ENCODE measurements at regions of chr7 and their contacts with region 1.

Region 1: GRCh38 chr7:76223286-76223972 is 21.7 kb downstream of the SRRM3 start:
- DNase-seq: no peak
- H3K4me3 Mint-ChIP-seq: no peak overlapping the region
- H3K27ac Mint-ChIP-seq: no peak overlapping the region
- H3K4me1 Mint-ChIP-seq: no peaks in the 10 kb centered on the region
- H3K27me3 Mint-ChIP-seq: peaks cover 22% of the 10 kb centered on the region
- CTCF ChIP-seq: no peak

Region 2: GRCh38 chr7:76201730-76202665 is 21.4 kb before region 1 on chr7 and contains the start of gene SRRM3:
- CTCF ChIA-PET with region 1: interaction called, 4 read pairs
- POLR2A ChIA-PET with region 1: no interaction called
- intact Hi-C with region 1: loop called (anchors 1 kb)
- DNase-seq: peak; percentile 60
- H3K4me3 Mint-ChIP-seq: no peak within 1 kb of the TSS
- H3K27ac Mint-ChIP-seq: no peak within 1 kb of the TSS
- H3K4me1 Mint-ChIP-seq: no peaks in the 10 kb centered on the region
- H3K27me3 Mint-ChIP-seq: peaks cover 31% of the 10 kb centered on the region
- CTCF ChIP-seq: peak; percentile 75
- total RNA-seq, gene SRRM3: 0.70 and 0.71 TPM in 2 replicates

Region 3: DNA sequence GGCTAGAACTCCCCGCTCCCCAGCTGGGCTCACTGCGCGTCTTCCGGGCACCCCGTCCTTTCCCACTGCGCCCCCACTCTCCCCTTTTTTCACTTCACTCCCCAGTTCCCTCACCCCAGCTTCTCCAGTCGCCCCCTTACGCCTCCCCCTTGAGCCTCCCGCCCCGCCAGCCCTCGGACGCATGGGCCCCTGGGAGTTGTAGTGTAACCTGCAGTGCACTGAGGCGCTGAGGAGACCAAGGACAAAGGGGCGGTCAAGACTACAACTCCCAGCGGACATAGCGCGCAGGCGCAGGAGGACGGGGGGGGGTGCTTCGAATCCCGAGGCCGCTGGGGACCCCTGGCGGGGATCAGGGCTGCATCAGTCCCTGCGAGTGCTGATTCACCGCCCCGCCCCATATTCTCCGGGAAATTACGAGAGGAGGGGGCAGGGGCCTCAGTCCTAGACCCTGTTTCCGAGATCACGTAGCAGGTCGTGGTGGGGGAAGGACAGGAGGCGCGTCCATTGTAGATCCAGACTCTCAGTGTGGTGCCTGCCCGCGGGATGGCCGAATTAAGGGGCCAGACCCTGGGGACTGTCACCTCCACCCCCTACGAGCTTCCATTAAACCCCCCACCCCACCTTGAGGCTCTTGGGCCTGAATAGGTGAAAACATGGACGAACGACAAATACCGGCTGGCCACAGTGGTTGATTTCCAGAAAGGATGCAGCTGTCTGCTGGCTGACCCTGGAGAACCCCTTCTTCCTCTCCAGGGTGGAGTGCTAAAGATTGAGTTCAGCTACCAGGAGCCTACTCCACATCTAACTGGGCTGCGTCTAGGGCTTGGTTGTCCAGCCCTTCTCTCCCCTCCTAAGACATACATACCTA is 135.9 kb after region 1 on chr7:
- CTCF ChIA-PET with region 1: no interaction called
- POLR2A ChIA-PET with region 1: no interaction called
- intact Hi-C with region 1: no loop called
- DNase-seq: peak; percentile 98
- H3K4me3 Mint-ChIP-seq: peak overlapping the region; percentile 89
- H3K27ac Mint-ChIP-seq: peak overlapping the region; percentile 97
- H3K4me1 Mint-ChIP-seq: peaks cover 27% of the 10 kb centered on the region
- H3K27me3 Mint-ChIP-seq: no peaks in the 10 kb centered on the region
- CTCF ChIP-seq: peak; percentile 70

Measured in MCF 10A (cell line).